Aorta (tissue), 5 donors: ENCODE measurements at regions of chr2 and their contacts with region 1.

Region 1: DNA sequence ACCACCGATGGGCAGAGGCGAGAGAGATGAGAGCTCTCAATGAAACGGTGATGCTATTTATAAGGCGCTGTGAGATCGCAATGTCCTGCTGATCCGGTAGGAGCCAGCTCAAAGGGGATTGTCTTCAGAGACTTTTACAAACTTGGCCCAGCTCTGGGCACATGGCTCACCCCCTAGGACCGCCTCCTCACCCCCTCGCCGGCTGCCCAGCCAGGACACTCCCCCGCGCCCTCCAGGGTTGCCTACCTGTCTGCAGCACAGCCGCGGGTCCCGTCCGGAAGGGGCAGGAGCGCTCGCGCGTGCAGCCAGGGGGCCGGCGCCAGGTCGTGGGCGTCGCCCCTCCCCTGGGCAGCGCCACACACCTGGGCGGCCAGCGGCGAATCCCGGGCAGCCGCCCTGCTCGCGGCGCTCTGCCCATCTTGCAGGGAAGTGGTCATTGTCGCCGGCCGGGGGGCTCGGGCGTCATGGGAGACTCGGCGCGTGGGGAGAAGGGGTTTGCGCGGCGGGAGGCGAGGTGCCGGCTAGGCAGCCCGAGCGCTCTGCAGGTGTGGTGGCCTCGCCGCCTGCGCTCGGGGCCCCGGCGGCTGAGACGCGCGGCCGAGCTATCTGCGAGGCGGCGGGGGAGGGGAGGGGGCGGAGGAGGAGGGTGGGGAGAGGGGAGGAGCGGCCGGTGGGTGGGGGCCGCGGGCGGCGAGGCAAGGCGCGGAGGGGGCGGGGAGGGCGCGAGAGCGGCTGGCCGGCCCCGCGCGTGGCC is at the start of gene GRB14:
- DNase-seq: peak; percentile 61 to 77
- ATAC-seq: peak; percentile 36
- H3K4me3 ChIP-seq: peak within 1 kb of the TSS; percentile 53 to 58
- H3K27ac ChIP-seq: no peak within 1 kb of the TSS
- H3K4me1 ChIP-seq: peaks cover 3 to 8% of the 10 kb centered on the region in 2 donors
- H3K27me3 ChIP-seq: no peaks in the 10 kb centered on the region
- total RNA-seq, gene GRB14: 5.1 to 6.2 TPM

Region 2: GRCh38 chr2:164574925-164575324 is 46.1 kb before region 1 on chr2:
- intact Hi-C with region 1: loop called in 1 of 2 experiments (anchors 10 kb)
- DNase-seq: no peak
- ATAC-seq: no peak
- H3K4me3 ChIP-seq: no peak overlapping the region
- H3K27ac ChIP-seq: no peak overlapping the region
- H3K4me1 ChIP-seq: no peaks in the 10 kb centered on the region
- H3K27me3 ChIP-seq: no peaks in the 10 kb centered on the region

Region 3: GRCh38 chr2:164671664-164672396 is 50.8 kb after region 1 on chr2:
- intact Hi-C with region 1: loop called in 1 of 2 experiments (anchors 5 kb)
- DNase-seq: no peak
- ATAC-seq: peak; percentile 64
- H3K4me3 ChIP-seq: no peak overlapping the region
- H3K27ac ChIP-seq: no peak overlapping the region
- H3K4me1 ChIP-seq: peaks cover 0 to 3% of the 10 kb centered on the region in 2 donors
- H3K27me3 ChIP-seq: no peaks in the 10 kb centered on the region